A673 (cell line): ENCODE measurements at regions of chr10 and their contacts with region 1.

Region 1: DNA sequence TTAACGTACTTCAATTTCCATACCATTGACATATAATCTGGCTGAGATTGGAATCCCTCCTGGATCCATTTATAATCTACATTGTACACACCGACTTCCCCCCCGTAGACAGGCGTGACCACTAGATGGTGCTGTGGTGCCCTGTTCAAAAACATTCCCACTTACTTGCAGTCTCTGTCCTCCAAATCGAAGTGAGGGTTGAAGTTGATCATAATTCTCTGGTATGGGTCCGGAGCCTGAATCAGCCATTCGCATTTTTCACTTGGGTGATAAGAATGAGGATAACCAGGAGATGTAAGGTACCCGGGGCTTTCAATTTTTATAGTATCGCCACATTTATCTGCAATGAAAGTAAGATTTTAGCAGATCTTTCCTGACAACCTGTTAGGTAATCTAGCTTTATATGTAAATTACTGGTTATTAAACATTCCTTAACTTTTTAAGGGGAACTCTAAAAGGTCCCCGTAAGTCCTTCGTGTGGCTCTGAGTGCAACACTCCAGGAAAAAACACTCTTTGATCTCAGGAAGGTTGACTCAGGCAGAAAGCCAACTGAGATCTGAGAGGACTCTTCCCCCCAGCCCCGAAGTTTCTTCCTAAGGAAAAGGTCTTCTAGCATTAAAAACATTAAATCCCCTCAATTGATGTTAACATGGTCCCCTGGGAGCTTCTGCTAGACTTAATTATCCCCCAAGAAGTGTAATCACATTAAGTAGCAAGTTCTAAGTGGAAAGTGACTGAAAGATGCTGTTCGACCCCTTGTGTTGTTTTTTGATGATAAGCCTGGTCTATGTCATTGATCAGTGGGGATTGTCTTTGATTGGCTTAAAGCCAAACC is 3.7 kb downstream of the NRP1 start:
- DNase-seq: peak; percentile 92
- H3K4me3 ChIP-seq: peak overlapping the region; percentile 23
- H3K27ac ChIP-seq: no peak overlapping the region
- H3K4me1 ChIP-seq: peaks cover 47% of the 10 kb centered on the region
- H3K27me3 ChIP-seq: no peaks in the 10 kb centered on the region
- CTCF ChIP-seq: peak; percentile 95

Region 2: DNA sequence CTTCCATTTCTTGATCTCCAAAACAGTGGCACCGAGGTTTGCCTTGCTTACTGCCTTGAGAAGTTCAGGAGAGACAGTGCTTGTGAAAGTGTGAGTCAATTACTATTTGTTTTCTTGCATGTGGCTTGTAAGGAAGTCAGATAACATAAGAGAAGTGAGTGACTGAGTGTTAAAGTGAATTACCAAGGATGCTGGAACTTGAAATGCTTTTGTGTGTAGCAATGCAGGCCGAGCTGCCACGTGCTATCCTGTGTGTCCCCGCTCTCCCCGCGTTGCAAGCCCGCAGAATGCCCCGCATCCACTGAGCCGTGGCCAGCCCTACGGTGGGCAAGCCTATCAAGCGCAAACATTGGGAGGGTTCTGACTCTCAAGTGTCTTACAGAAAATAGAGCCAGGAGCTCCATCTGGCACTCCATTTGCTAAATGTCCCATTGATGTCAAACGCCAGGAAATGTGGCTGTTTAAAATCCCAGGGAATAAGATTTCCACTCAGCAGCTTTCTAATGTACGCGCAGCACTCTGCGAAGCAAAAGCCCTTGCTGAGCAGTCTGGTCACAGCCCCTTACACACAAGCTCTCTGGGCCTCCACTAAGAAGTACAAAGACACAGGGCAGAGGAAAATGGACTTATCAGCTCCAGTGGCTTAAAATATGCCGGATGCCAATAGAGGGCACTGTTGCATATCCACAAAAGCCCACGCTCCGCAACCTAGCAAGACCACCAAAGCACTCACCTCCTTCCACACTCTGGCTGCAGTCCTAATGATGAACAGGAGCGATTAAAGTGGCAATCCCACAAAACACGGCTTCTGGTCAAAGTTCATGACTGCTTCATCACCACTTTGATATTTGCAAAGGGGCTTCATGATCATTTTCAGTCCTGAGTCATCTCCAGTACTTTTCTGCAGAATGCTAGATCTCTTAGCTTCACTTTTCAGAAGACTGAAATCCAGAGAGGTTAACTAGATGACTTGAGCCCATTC is 214.7 kb before region 1 on chr10:
- CTCF ChIA-PET with region 1: interaction called, 4 read pairs
- POLR2A ChIA-PET with region 1: no interaction called
- intact Hi-C with region 1: loop called (anchors 2 kb)
- DNase-seq: peak; percentile 82
- H3K4me3 ChIP-seq: no peak overlapping the region
- H3K27ac ChIP-seq: no peak overlapping the region
- H3K4me1 ChIP-seq: peaks cover 14% of the 10 kb centered on the region
- H3K27me3 ChIP-seq: no peaks in the 10 kb centered on the region
- CTCF ChIP-seq: peak; percentile 87

Region 3: DNA sequence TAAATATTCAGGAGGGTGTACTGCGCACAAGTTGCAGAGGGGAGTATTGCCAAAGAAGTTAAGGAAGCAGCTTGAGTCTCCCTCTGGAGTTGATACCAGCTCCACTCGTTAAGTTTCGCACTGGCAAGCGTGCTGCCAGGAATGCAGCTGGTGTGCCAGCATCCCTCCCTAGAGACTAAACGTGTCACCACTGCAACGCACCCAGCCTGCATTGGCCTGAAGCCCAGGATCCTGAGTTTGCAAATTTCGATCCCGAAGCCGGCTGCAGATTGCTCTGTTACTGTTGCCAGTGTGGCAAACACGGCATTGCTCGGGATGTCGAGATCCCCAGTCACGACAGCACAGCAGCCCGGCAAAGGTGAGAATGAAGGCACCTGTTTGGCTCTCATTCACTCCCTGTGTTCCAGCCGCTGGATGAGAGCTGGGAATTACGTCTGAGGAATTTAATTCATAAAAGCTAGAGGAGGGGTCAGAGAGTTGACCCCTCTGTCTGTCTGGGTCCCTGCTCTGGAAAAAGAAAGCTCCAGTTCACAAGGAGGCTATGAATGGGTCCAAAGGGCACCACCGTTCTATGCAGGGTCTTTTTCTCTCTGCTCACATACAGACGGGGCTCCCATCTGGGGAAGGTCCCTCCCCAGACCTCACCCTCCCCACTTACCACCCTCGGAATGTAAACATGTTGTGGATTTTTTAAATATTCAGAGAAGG is 57.3 kb before region 1 on chr10:
- CTCF ChIA-PET with region 1: interaction called, 3 read pairs
- POLR2A ChIA-PET with region 1: no interaction called
- intact Hi-C with region 1: loop called (anchors 1 kb)
- DNase-seq: peak; percentile 97
- H3K4me3 ChIP-seq: peak overlapping the region; percentile 16
- H3K27ac ChIP-seq: peak overlapping the region; percentile 77
- H3K4me1 ChIP-seq: peaks cover 41% of the 10 kb centered on the region
- H3K27me3 ChIP-seq: no peaks in the 10 kb centered on the region
- CTCF ChIP-seq: peak; percentile 44

Region 4: GRCh38 chr10:33927347-33927746 is 596.6 kb after region 1 on chr10:
- CTCF ChIA-PET with region 1: no interaction called
- POLR2A ChIA-PET with region 1: no interaction called
- intact Hi-C with region 1: loop called (anchors 2 kb)
- DNase-seq: peak; percentile 56
- H3K4me3 ChIP-seq: no peak overlapping the region
- H3K27ac ChIP-seq: peak overlapping the region; percentile 35
- H3K4me1 ChIP-seq: peaks cover 44% of the 10 kb centered on the region
- H3K27me3 ChIP-seq: no peaks in the 10 kb centered on the region
- CTCF ChIP-seq: no peak

Region 5: DNA sequence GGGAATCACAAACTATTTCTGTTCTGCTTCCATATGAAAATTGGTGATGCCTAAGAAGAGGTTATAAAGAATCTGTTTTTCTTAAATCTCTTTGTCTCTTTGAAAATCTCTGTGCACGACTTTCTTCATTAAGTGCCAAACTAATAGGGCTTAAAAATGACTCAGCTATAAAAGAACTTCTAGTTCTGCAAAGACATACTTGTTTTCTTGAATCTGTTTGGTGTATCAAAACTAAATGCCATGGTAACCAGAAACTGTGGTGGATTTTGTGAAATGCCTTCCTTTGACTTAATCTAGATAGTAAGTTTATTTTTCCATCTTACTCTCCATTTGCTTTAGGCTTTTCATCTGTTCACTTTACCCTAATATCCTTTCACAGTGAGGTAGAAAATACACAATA is 1066.6 kb after region 1 on chr10:
- CTCF ChIA-PET with region 1: no interaction called
- POLR2A ChIA-PET with region 1: no interaction called
- intact Hi-C with region 1: loop called (anchors 10 kb)
- DNase-seq: peak; percentile 27
- H3K4me3 ChIP-seq: no peak overlapping the region
- H3K27ac ChIP-seq: no peak overlapping the region
- H3K4me1 ChIP-seq: peaks cover 17% of the 10 kb centered on the region
- H3K27me3 ChIP-seq: no peaks in the 10 kb centered on the region
- CTCF ChIP-seq: no peak

Region 6: DNA sequence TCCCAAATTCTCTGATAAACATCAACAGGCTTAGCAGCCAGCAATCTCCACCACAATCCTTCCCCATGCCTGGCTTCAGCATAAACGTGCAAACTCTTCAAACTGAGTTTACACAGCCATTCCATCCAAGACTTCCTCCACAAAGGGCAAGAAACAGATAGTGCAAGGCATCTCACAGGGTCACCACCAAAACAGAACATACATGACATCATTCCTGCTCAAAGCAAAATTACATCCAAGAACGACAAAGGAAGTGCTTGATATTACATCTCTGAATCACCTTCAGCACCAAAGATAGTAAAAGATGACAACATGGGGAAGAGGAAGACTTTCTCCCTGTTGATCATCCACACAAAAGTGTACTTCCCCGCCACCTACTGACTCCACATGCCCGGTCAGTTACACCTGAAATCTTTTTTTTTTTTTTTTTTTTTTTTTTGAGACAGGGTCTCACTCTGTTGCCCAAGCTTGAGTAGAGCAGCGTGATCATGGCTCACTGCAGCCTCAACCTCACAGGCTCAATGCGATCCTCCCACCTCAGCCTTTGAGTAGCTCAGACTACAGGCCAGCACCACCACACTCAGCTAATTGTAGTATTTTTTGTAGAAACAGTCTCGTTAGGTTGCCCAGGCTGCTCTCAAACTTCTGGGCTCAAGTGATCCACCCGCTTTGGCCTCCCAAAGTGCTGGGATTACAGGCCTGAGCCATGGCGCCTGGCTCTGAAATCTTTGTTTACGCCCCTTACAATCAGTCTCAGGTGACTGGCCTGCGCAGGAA is 1356.9 kb after region 1 on chr10:
- CTCF ChIA-PET with region 1: interaction called, 16 read pairs
- POLR2A ChIA-PET with region 1: no interaction called
- intact Hi-C with region 1: no loop called
- DNase-seq: no peak
- H3K4me3 ChIP-seq: no peak overlapping the region
- H3K27ac ChIP-seq: no peak overlapping the region
- H3K4me1 ChIP-seq: peaks cover 12% of the 10 kb centered on the region
- H3K27me3 ChIP-seq: no peaks in the 10 kb centered on the region
- CTCF ChIP-seq: no peak